ENCODE measurements at regions of chrX and their contacts with region 1.

Region 1: DNA sequence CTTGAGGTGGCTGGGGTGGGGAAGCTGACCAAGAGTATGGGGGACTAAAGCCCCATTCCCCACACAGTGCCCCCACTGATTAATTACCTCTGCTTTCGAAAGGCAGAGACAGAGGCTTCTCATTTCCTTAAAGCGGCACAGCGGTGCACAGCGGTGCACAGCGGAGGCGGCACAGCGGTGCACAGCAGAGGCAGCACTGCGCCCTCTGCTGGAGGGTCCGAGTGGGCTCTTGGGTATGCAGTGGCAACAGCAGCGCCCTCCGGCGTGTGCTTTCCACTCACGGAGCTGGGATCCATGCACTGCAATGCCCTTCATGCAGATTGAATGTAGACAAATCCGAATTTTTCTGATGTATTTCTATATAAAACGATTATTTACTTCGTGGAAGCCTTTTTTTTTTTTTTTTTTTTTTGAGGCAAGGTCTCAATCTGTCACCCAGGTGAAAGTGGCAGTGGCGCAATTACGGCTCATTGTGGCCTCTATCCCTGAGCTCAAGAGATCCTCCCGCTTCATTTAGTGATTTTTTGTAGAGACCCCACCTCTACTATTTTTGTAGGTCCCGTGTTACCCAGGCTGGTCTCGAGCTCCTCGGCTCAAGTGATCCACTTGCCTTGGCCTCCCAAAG is 19.7 kb upstream of the PRPS2 start:
- DNase-seq: peak; percentile 27 to 73
- ATAC-seq: peak; percentile 97 to 99
- H3K4me3 ChIP-seq: 0 out of 3 replicates have a peak overlapping the region, but pooled peaks have one; percentile 2
- H3K27ac ChIP-seq: no peak overlapping the region
- H3K4me1 ChIP-seq: no peaks in the 10 kb centered on the region
- CTCF ChIP-seq: peak; percentile 70
- EP300 ChIP-seq: no peak
- POLR2A ChIP-seq: no peak
- RAD21 ChIP-seq: peak in 1 of 2 experiments; percentile 39; a peak in 2 of 5 replicates

Region 2: DNA sequence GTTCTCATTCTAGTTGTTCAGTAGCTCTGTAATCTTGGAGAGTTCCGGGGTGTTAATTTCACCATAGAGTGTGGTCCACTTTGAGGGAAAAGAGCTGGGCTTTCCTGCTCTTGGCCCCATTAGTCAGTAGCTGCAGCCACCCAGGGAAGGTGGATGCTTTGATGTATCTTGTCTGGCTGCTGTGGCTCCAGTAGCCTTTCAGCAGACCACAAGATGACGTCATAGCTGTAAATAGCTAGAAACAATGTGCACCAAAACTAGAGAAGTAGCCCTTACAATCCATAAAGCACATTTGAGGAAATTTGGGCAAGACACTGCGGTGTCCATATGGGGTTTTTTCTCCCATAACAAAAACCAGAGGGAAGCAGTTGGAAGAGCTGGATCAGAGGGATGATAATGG is 13.3 kb before region 1 on chrX:
- CTCF ChIA-PET with region 1: interaction called, 12 read pairs
- POLR2A ChIA-PET with region 1: no interaction called
- DNase-seq: no peak
- ATAC-seq: no peak
- H3K4me3 ChIP-seq: no peak overlapping the region
- H3K27ac ChIP-seq: no peak overlapping the region
- H3K4me1 ChIP-seq: no peaks in the 10 kb centered on the region
- CTCF ChIP-seq: no peak
- EP300 ChIP-seq: no peak
- POLR2A ChIP-seq: no peak
- RAD21 ChIP-seq: no peak

Measured in A549 (cell line).